K562 (cell line): ENCODE measurements at regions of chr18 and their contacts with region 1.

Region 1: GRCh38 chr18:64659196-64659595 is 510.3 kb upstream of the LINC00305 start:
- DNase-seq: no peak
- ATAC-seq: no peak
- H3K4me3 ChIP-seq: no peak overlapping the region
- H3K27ac ChIP-seq: no peak overlapping the region
- H3K4me1 ChIP-seq: no peaks in the 10 kb centered on the region
- H3K27me3 ChIP-seq: no peaks in the 10 kb centered on the region
- CTCF ChIP-seq: no peak
- EP300 ChIP-seq: no peak
- POLR2A ChIP-seq: no peak
- RAD21 ChIP-seq: no peak

Region 2: DNA sequence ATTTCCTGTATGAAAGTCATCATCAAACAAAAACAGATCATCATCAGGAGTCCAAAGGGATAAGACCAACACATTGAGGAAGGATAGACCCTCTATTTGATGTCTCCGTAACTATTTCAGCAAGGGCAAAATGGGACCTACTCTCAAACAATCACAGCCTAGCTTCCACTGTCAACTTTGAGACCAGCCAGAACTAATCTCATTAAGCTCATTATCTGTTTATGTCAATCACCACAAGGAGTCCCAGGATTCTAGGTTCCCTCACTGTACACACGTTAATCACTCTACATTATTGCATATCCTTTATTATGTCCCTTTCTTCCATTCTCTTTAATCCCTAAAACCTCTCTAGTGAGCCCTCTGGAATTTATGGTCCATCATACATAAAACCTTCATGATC is 140.0 kb before region 1 on chr18:
- CTCF ChIA-PET with region 1: no interaction called
- POLR2A ChIA-PET with region 1: no interaction called
- in situ Hi-C with region 1: no loop called
- intact Hi-C with region 1: no loop called
- DNase-seq: no peak
- ATAC-seq: no peak
- H3K4me3 ChIP-seq: no peak overlapping the region
- H3K27ac ChIP-seq: no peak overlapping the region
- H3K4me1 ChIP-seq: no peaks in the 10 kb centered on the region
- H3K27me3 ChIP-seq: no peaks in the 10 kb centered on the region
- CTCF ChIP-seq: no peak
- EP300 ChIP-seq: no peak
- POLR2A ChIP-seq: no peak
- RAD21 ChIP-seq: no peak

Region 3: GRCh38 chr18:64713284-64713683 is 54.1 kb after region 1 on chr18:
- CTCF ChIA-PET with region 1: no interaction called
- POLR2A ChIA-PET with region 1: no interaction called
- in situ Hi-C with region 1: no loop called
- intact Hi-C with region 1: loop called (anchors 10 kb)
- DNase-seq: no peak
- ATAC-seq: no peak
- H3K4me3 ChIP-seq: no peak overlapping the region
- H3K27ac ChIP-seq: no peak overlapping the region
- H3K4me1 ChIP-seq: no peaks in the 10 kb centered on the region
- H3K27me3 ChIP-seq: no peaks in the 10 kb centered on the region
- CTCF ChIP-seq: no peak
- EP300 ChIP-seq: no peak
- POLR2A ChIP-seq: no peak
- RAD21 ChIP-seq: no peak